ENCODE measurements at regions of chr20 and their contacts with region 1.

Region 1: DNA sequence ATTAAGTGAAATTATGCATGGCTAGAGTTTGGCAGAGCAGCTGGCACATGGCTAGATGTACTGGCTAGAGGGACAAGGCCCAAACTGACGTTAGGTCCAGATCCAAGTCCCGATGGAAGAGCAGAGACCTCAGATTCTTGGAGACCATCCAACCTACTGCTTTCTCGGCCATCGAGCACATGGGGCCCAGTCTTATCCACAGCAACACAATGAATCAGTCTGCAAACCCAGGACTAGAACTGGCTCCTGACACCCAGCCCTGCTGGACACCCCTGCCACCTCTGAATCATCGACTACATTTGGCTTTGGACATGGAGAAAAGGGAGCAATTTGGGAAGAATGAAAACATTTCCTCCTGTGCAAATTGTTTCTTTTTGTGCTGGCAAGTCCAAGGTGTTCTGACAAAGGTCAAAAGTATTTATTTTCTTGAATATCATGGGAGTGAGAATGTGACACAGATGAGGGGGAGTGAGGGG is 23.9 kb upstream of the YWHAB start:
- DNase-seq: no peak
- H3K4me3 Mint-ChIP-seq: no peak overlapping the region
- H3K27ac Mint-ChIP-seq: no peak overlapping the region
- H3K4me1 Mint-ChIP-seq: peaks cover 3% of the 10 kb centered on the region
- H3K27me3 Mint-ChIP-seq: no peaks in the 10 kb centered on the region

Region 2: DNA sequence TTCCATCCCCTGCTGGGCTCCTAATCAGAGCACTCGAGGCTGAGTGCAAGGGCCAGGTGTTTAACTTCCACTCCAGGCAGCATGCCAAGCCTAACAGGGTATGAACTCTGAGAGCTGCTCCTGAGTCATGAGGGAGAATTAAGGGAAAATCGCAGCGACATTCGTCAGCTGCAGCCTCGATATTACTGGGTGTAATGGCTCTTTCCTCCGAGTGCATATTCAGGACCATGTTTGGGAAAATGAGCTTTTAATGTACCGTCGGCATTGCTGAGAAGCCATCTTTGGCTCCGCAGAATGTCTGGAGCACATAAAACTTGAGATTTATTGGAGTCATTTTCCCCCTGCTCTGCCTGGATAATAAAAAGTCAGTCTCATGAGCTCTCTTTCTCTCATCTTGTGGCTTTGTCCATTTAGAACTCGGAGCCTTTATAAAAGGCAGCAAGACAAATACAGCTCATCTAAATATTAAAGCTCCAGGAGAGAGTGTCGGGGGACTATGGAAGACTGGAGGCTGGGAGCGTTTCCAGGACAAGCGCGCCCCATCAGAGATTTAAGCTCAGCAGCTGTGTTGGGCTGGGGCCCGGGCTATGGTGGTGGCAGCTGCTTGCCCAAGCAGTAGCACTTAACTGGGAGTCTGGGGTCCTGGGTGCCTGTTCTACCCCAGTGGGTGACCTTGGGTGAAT is 843.2 kb before region 1 on chr20:
- CTCF ChIA-PET with region 1: no interaction called
- intact Hi-C with region 1: loop called (anchors 5 kb)
- DNase-seq: no peak
- H3K4me3 Mint-ChIP-seq: no peak overlapping the region
- H3K27ac Mint-ChIP-seq: no peak overlapping the region
- H3K4me1 Mint-ChIP-seq: peaks cover 23% of the 10 kb centered on the region
- H3K27me3 Mint-ChIP-seq: no peaks in the 10 kb centered on the region

Measured in activated naive CD4-positive, alpha-beta T cell treated with anti-CD3 and anti-CD28 coated beads for 36 hours (primary cell).